Activated naive CD4-positive, alpha-beta T cell treated with anti-CD3 and anti-CD28 coated beads for 36 hours (primary cell): ENCODE measurements at regions of chr2 and their contacts with region 1.

Region 1: GRCh38 chr2:152189622-152190495 is 14.3 kb upstream of the STAM2 start:
- DNase-seq: peak; percentile 49
- H3K4me3 Mint-ChIP-seq: no peak overlapping the region
- H3K27ac Mint-ChIP-seq: no peak overlapping the region
- H3K4me1 Mint-ChIP-seq: peaks cover 5% of the 10 kb centered on the region
- H3K27me3 Mint-ChIP-seq: peaks cover 17% of the 10 kb centered on the region

Region 2: GRCh38 chr2:152627351-152627957 is 437.6 kb after region 1 on chr2:
- CTCF ChIA-PET with region 1: no interaction called
- intact Hi-C with region 1: loop called (anchors 1 kb)
- DNase-seq: no peak
- H3K4me3 Mint-ChIP-seq: no peak overlapping the region
- H3K27ac Mint-ChIP-seq: no peak overlapping the region
- H3K4me1 Mint-ChIP-seq: peaks cover 4% of the 10 kb centered on the region
- H3K27me3 Mint-ChIP-seq: peaks cover 6% of the 10 kb centered on the region